Transverse colon (tissue), 4 donors: ENCODE measurements at regions of chr14 and their contacts with region 1.

Region 1: GRCh38 chr14:86179980-86180379 is 650.0 kb downstream of the FLRT2 start:
- DNase-seq: no peak
- H3K4me3 ChIP-seq: no peak overlapping the region
- H3K27ac ChIP-seq: no peak overlapping the region
- H3K4me1 ChIP-seq: no peaks in the 10 kb centered on the region
- H3K27me3 ChIP-seq: no peaks in the 10 kb centered on the region
- CTCF ChIP-seq: no peak
- EP300 ChIP-seq: no peak
- POLR2A ChIP-seq: no peak

Region 2: DNA sequence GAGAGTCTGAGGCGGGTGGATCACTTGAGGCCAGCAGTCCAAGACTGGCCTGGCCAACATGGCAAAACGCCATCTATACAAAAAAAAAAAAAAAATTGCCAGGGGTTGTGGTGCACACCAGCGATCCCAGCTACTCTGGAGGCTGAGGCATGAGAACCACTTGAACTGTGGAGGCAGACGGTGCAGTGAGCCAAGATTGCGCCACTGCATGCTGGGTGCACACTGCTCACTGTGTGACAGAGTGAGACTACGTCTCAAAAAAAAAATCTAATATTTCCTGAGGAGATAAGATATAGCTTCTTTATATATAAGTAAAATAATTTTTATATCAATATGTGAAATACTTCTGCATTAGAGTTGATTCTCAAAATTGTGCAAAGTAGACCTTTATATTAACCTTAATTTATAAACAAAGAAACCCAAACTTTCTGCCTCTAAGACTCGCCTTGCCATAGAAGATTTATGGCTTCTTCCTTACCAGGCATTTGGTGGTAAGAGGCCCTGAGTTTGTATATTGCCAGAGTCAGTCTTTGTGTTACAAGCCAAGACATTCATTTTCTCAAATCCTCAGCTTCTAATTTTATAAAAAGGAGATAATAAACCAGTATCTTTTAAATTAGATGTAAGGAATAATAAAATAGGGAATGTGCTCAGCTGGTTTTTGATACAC is 576.7 kb after region 1 on chr14:
- in situ Hi-C with region 1: no loop called
- intact Hi-C with region 1: loop called (anchors 5 kb)
- DNase-seq: no peak
- H3K4me3 ChIP-seq: no peak overlapping the region
- H3K27ac ChIP-seq: no peak overlapping the region
- H3K4me1 ChIP-seq: no peaks in the 10 kb centered on the region
- H3K27me3 ChIP-seq: no peaks in the 10 kb centered on the region
- CTCF ChIP-seq: no peak
- EP300 ChIP-seq: no peak
- POLR2A ChIP-seq: no peak